CD14-positive monocyte (primary cell): ENCODE measurements at regions of chr2 and their contacts with region 1.

Region 1: GRCh38 chr2:8477552-8478470 is 204.0 kb upstream of the ID2 start:
- DNase-seq: peak; percentile 52 to 83 (median 69)
- H3K4me3 ChIP-seq: peak overlapping the region in 1 of 3 experiments; percentile 62
- H3K4me3 Mint-ChIP-seq: peak overlapping the region; percentile 73 to 85
- H3K27ac ChIP-seq: peak overlapping the region; percentile 81 to 88
- H3K27ac Mint-ChIP-seq: peak overlapping the region; percentile 91 to 97 (median 95)
- H3K4me1 ChIP-seq: peaks cover 85 to 88% of the 10 kb centered on the region in 2 donors
- H3K4me1 Mint-ChIP-seq: peaks cover 89% of the 10 kb centered on the region
- H3K27me3 ChIP-seq: no peaks in the 10 kb centered on the region
- H3K27me3 Mint-ChIP-seq: peaks cover 0 to 3% (median 2%) of the 10 kb centered on the region in 3 donors
- CTCF ChIP-seq: no peak

Region 2: DNA sequence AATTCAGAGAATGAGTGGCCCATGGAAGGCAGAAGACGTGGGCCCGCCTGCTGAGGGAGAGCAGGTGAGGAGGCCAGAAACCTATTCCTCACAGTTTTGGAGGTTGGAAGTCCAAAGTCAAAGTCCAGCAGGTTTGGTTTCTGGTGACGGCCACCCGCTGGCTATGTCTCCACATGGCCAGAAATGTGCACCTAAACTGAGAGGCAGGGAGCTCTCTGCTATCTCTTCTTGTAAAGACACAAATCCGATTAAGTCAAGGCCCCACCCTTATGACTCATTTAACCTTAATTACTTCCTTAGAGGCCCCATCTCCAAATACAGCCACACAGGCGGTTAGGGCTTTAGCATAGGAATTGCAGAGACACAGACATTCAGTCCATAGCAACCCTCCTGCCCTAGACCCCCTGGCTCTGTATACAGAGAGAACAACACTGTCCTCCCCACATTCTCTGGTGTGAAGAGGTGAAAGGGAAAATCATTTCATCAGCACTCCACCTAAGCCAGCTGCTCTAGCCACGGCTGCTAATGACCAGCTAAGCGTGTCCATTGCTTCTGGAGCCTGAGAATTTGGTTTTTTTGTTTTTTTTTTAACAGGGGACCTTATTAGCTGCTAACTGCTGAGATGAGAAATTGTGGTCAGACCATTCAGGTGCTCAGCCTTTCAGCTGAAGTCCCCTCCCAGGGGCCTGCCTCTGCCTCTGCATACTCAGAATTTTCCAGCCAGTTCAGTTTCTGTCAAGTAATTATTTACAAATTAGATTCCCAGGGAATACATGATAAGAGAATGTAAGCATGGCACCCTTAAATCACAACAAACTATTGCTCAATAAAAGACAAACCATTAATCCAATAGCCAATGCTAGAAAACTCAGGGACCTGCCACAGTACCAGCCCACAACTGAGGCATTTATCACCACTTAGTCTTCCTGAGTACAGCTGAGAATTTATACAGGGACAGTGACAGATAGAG is 164.7 kb before region 1 on chr2:
- intact Hi-C with region 1: loop called in 1 of 2 experiments (anchors 10 kb)
- DNase-seq: peak; percentile 51 to 79 (median 73)
- H3K4me3 ChIP-seq: peak overlapping the region in 1 of 3 experiments; percentile 51
- H3K4me3 Mint-ChIP-seq: peak overlapping the region in 1 of 2 donors; percentile 31
- H3K27ac ChIP-seq: peak overlapping the region; percentile 41 to 86
- H3K27ac Mint-ChIP-seq: peak overlapping the region; percentile 86 to 93 (median 91)
- H3K4me1 ChIP-seq: peaks cover 82 to 87% of the 10 kb centered on the region in 2 donors
- H3K4me1 Mint-ChIP-seq: peaks cover 84% of the 10 kb centered on the region
- H3K27me3 ChIP-seq: no peaks in the 10 kb centered on the region
- H3K27me3 Mint-ChIP-seq: peaks cover 0 to 7% (median 6%) of the 10 kb centered on the region in 3 donors
- CTCF ChIP-seq: no peak

Region 3: GRCh38 chr2:8412586-8412985 is 65.2 kb before region 1 on chr2:
- intact Hi-C with region 1: loop called in 1 of 2 experiments (anchors 10 kb)
- DNase-seq: no peak
- H3K4me3 ChIP-seq: no peak overlapping the region
- H3K4me3 Mint-ChIP-seq: peak overlapping the region in 1 of 2 donors; percentile 46
- H3K27ac ChIP-seq: no peak overlapping the region
- H3K27ac Mint-ChIP-seq: peak overlapping the region in 4 of 7 donors; percentile 23 to 51 (median 40)
- H3K4me1 ChIP-seq: peaks cover 62 to 73% of the 10 kb centered on the region in 2 donors
- H3K4me1 Mint-ChIP-seq: peaks cover 73% of the 10 kb centered on the region
- H3K27me3 ChIP-seq: no peaks in the 10 kb centered on the region
- H3K27me3 Mint-ChIP-seq: peaks cover 0 to 2% (median under 1%) of the 10 kb centered on the region in 3 donors
- CTCF ChIP-seq: no peak

Region 4: GRCh38 chr2:8525582-8526402 is 48.0 kb after region 1 on chr2:
- intact Hi-C with region 1: loop called in 1 of 2 experiments (anchors 5 kb)
- DNase-seq: peak; percentile 77 to 89 (median 86)
- H3K4me3 ChIP-seq: peak overlapping the region in 1 of 3 experiments; percentile 56
- H3K4me3 Mint-ChIP-seq: peak overlapping the region; percentile 50 to 83
- H3K27ac ChIP-seq: peak overlapping the region; percentile 43 to 72
- H3K27ac Mint-ChIP-seq: peak overlapping the region; percentile 68 to 91 (median 87)
- H3K4me1 ChIP-seq: peaks cover 49 to 65% of the 10 kb centered on the region in 2 donors
- H3K4me1 Mint-ChIP-seq: peaks cover 73% of the 10 kb centered on the region
- H3K27me3 ChIP-seq: no peaks in the 10 kb centered on the region
- H3K27me3 Mint-ChIP-seq: peaks cover 0 to 1% (median 0%) of the 10 kb centered on the region in 3 donors
- CTCF ChIP-seq: peak; percentile 78